ENCODE measurements at regions of chr17 and their contacts with region 1.

Region 1: DNA sequence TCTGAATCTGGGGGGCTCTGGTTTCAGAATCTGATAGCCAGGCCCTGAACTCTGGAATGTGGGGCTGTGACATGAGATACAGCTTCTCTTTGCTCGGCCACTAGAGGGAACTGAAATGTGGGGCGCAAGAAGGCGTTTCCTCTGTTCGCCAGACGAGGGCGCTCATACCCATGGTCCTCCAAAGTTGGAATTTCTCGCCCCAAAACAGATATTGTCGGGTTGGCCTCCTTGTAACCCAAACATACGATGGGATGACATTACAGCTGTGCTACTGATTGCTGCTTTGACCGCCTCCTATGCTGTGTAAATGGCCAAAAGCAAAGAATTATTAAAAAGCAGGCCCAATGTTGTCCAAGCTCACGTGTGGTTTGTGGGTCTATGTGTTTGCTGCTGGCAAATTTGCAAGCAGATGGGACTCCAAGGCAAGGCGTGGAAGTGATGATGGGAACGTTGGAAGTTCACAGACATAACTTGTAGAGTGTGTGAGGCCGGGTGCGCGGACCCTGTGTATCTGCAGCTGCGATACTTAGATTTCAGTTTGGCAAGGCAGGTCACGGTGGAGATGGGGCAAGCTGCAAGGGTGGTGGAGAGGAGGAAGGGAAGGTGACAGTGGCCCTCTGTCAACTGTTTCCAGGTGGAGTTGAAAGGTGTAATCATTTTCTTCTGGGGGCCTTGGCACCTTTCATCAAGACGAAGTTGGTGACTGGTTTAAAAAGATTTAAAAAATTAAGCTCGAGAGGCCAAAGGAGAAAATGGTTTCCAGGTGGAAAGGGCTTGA is 13.0 kb upstream of the MSI2 start:
- DNase-seq: peak; percentile 73
- H3K4me3 Mint-ChIP-seq: no peak overlapping the region
- H3K27ac Mint-ChIP-seq: no peak overlapping the region
- H3K4me1 Mint-ChIP-seq: peaks cover 4% of the 10 kb centered on the region
- H3K27me3 Mint-ChIP-seq: no peaks in the 10 kb centered on the region
- CTCF ChIP-seq: peak; percentile 98

Region 2: DNA sequence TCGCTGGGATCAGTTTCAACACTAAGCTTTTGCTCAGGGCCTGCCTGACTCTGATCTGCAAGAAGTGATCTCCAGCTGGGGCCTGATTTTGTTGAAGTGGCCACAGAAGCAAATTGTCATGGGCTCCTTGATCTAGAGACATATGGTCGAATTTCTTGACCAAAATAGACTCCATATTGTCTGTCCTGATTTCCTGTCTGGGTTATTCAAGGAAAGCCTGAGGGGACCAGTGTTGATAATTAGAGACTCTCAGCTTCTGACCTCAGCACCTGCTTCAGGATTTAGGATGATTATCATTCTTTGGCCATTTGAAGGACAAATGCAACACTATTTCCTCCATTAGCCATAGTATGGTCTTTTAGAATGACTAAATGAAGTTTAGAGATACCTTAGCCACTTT is 35.9 kb before region 1 on chr17:
- CTCF ChIA-PET with region 1: interaction called, 20 read pairs
- POLR2A ChIA-PET with region 1: interaction called, 4 read pairs
- intact Hi-C with region 1: no loop called
- DNase-seq: no peak
- H3K4me3 Mint-ChIP-seq: no peak overlapping the region
- H3K27ac Mint-ChIP-seq: no peak overlapping the region
- H3K4me1 Mint-ChIP-seq: peaks cover 19% of the 10 kb centered on the region
- H3K27me3 Mint-ChIP-seq: no peaks in the 10 kb centered on the region
- CTCF ChIP-seq: no peak

Region 3: DNA sequence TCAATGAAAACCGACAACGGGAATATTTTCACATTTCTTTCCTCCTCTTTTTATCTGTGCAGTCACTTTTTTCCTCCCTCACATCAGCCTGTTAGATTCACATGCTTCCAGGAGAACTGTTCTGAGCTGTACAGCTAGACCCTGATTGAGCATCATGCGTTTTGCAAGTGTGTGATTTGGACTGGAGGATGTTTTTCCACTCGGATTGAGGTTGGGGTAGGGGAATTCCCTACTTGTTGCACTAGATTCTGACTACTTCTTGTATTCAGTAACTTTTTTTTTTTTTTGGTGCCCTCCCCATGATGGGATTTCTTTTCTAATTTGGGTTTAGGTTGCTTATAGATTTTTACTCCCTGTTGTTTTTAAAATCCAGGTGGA is 17.7 kb after region 1 on chr17:
- CTCF ChIA-PET with region 1: interaction called, 10 read pairs
- POLR2A ChIA-PET with region 1: interaction called, 4 read pairs
- intact Hi-C with region 1: no loop called
- DNase-seq: no peak
- H3K4me3 Mint-ChIP-seq: no peak overlapping the region
- H3K27ac Mint-ChIP-seq: no peak overlapping the region
- H3K4me1 Mint-ChIP-seq: peaks cover 29% of the 10 kb centered on the region
- H3K27me3 Mint-ChIP-seq: no peaks in the 10 kb centered on the region
- CTCF ChIP-seq: no peak

Region 4: DNA sequence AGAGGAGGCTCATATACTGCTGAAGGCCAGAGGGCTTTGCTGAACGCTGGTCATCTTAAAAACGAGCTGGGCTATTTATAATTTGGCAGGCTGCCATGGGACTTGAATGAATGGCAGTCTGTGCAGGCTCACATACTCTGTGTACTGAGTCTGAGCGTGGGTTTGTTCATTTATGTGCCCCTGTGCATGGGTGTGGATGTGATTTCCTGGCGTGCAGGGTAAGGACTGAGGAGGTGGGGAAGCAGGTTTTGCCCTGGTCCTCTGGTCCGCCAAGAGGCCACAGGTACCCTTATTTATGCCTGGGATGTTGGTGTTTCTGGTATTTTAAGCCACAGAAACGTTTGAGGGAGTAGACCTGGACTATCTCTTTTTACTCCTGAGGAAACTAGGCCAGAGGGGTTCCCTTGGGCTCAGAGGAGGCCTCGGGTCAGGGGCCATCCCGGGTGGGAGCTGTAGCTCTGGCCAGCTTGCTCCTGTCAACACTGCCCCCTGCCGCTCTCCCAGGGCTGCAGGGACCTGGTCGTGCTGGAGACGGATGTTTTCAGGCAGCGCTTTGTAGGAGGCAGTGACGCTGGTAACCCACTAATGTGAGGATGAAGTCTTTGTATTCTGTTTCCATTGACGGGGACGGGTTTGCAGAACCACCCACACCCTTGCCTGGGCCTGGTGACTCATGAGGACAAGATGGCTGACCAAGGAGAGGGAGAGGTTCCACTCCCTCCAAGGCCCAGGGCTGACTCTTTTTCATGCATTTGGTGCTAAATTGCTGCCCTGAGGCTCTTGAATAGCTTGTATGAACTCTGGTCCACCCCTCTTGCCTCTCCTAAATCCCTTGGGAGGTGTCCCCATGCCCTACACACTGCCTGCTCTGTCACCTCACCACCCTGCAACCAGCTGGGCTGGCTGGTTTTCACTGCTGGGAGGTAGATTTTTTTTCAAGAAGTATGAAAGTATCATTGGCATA is 197.4 kb after region 1 on chr17:
- CTCF ChIA-PET with region 1: interaction called, 13 read pairs
- POLR2A ChIA-PET with region 1: no interaction called
- intact Hi-C with region 1: loop called (anchors 2 kb)
- DNase-seq: peak; percentile 90
- H3K4me3 Mint-ChIP-seq: peak overlapping the region; percentile 58
- H3K27ac Mint-ChIP-seq: peak overlapping the region; percentile 88
- H3K4me1 Mint-ChIP-seq: peaks cover 51% of the 10 kb centered on the region
- H3K27me3 Mint-ChIP-seq: no peaks in the 10 kb centered on the region
- CTCF ChIP-seq: peak; percentile 59

Region 5: GRCh38 chr17:57739402-57740392 is 496.3 kb after region 1 on chr17:
- CTCF ChIA-PET with region 1: interaction called, 13 read pairs
- POLR2A ChIA-PET with region 1: interaction called, 3 read pairs
- intact Hi-C with region 1: loop called (anchors 1 kb)
- DNase-seq: peak; percentile 59
- H3K4me3 Mint-ChIP-seq: no peak overlapping the region
- H3K27ac Mint-ChIP-seq: no peak overlapping the region
- H3K4me1 Mint-ChIP-seq: no peaks in the 10 kb centered on the region
- H3K27me3 Mint-ChIP-seq: peaks cover 43% of the 10 kb centered on the region
- CTCF ChIP-seq: peak; percentile 44

Region 6: GRCh38 chr17:58112970-58113631 is 869.7 kb after region 1 on chr17:
- CTCF ChIA-PET with region 1: no interaction called
- POLR2A ChIA-PET with region 1: no interaction called
- intact Hi-C with region 1: loop called (anchors 2 kb)
- DNase-seq: peak; percentile 81
- H3K4me3 Mint-ChIP-seq: no peak overlapping the region
- H3K27ac Mint-ChIP-seq: no peak overlapping the region
- H3K4me1 Mint-ChIP-seq: no peaks in the 10 kb centered on the region
- H3K27me3 Mint-ChIP-seq: peaks cover 16% of the 10 kb centered on the region
- CTCF ChIP-seq: peak; percentile 93

Measured in MCF 10A (cell line).